ENCODE measurements at regions of chr6 and their contacts with region 1.

Region 1: GRCh38 chr6:48826901-48827701 is 636.0 kb downstream of the MMUT start:
- DNase-seq: peak; percentile 99
- ATAC-seq: peak; percentile 88
- H3K4me3 ChIP-seq: peak overlapping the region; percentile 55
- H3K27ac ChIP-seq: peak overlapping the region; percentile 99
- H3K4me1 ChIP-seq: peaks cover 45% of the 10 kb centered on the region
- H3K27me3 ChIP-seq: no peaks in the 10 kb centered on the region
- CTCF ChIP-seq: no peak

Region 2: DNA sequence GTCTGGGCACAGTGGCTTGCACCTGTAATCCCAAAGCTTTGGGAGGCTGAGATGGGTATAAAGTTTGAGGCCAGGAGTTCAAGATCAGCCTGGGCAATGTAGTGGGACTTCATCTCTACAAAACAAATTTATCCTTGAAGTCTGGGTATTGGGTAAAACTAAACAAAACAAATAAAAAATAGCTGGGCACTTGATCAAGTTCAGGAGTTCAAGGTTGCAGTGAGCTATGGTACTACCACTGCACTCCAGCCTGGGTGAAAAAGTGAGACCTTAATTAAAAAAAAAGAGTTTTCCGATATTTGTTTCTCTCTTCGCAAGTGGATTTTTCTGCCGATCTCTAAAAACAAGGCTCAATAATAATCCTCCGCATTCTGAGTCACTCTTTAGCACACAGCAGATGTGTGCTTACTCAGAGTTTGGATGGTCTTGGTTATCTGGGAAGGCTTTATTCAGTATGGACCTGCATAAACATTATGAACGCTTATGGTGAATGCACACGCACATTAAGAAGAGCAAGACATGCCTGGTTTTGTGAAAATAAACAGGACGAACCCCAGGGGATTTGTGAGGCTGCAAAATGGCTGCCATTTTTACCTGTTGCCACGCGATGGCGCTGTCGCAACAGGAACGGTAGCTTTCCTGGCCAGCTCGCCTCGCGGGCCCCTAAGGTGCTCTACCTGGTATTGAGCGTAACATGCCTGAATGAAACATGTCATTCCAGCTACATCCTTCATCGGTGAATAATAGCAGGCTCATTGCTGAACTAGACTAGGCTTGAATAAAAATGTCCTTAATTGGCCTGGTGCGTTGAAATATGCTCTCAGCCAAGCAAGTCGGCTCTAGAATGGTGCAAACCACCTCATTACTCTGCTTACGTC is 1039.2 kb before region 1 on chr6:
- CTCF ChIA-PET with region 1: no interaction called
- POLR2A ChIA-PET with region 1: no interaction called
- intact Hi-C with region 1: loop called (anchors 2 kb)
- DNase-seq: peak; percentile 88
- ATAC-seq: peak; percentile 95
- H3K4me3 ChIP-seq: peak overlapping the region; percentile 27
- H3K27ac ChIP-seq: no peak overlapping the region
- H3K4me1 ChIP-seq: peaks cover 16% of the 10 kb centered on the region
- H3K27me3 ChIP-seq: no peaks in the 10 kb centered on the region
- CTCF ChIP-seq: peak; percentile 96

Region 3: GRCh38 chr6:48765352-48765961 is 61.6 kb before region 1 on chr6:
- CTCF ChIA-PET with region 1: interaction called, 9 read pairs
- POLR2A ChIA-PET with region 1: no interaction called
- intact Hi-C with region 1: loop called (anchors 1 kb)
- DNase-seq: peak; percentile 87
- ATAC-seq: peak; percentile 82
- H3K4me3 ChIP-seq: no peak overlapping the region
- H3K27ac ChIP-seq: peak overlapping the region; percentile 79
- H3K4me1 ChIP-seq: peaks cover 34% of the 10 kb centered on the region
- H3K27me3 ChIP-seq: no peaks in the 10 kb centered on the region
- CTCF ChIP-seq: peak; percentile 87

Region 4: DNA sequence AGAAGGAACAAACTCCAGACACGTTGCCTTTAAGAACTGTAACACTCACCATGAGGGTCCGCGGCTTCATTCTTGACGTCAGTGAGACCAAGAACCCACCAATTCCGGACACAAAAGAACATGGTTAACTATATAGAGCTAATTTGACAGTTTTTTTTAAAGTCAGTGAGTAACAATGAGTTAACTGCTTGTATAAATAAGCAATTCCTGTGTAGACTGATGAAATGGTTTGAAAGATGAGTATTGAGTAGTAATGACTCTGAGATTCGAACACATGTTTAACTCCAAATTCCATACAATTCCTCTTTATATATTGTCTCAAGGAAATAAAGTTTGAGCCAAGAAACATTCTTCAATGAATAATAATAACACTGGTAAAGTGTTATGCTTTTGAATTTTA is 157.9 kb after region 1 on chr6:
- CTCF ChIA-PET with region 1: no interaction called
- POLR2A ChIA-PET with region 1: no interaction called
- intact Hi-C with region 1: no loop called
- DNase-seq: peak; percentile 28
- ATAC-seq: 0 out of 2 replicates have a peak, but pooled peaks have one; percentile 20
- H3K4me3 ChIP-seq: no peak overlapping the region
- H3K27ac ChIP-seq: no peak overlapping the region
- H3K4me1 ChIP-seq: no peaks in the 10 kb centered on the region
- H3K27me3 ChIP-seq: no peaks in the 10 kb centered on the region
- CTCF ChIP-seq: no peak

Region 5: GRCh38 chr6:49001856-49002541 is 174.9 kb after region 1 on chr6:
- CTCF ChIA-PET with region 1: no interaction called
- POLR2A ChIA-PET with region 1: no interaction called
- intact Hi-C with region 1: loop called (anchors 1 kb)
- DNase-seq: peak; percentile 67
- ATAC-seq: peak; percentile 96
- H3K4me3 ChIP-seq: no peak overlapping the region
- H3K27ac ChIP-seq: peak overlapping the region; percentile 32; the same call in 1 of the 2 replicates
- H3K4me1 ChIP-seq: peaks cover 12% of the 10 kb centered on the region
- H3K27me3 ChIP-seq: no peaks in the 10 kb centered on the region
- CTCF ChIP-seq: no peak

Region 6: DNA sequence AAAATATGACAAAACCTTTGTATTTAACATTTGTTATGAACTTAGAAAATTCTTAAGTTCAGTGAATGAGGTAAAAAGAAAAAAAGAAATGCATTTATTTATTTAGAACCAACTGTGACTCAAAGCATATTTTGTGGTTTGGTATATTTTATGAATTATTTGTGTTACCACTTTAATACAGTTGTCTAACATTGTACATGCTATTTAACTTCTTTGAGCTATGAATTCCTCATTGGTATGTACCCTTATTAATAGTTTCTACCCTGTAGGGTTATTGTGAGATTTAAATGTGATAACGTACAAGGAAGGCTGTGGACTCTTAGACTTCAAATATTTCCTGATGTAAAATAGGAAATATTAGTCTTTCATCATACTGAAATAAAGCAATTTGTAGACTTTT is 473.3 kb after region 1 on chr6:
- CTCF ChIA-PET with region 1: no interaction called
- POLR2A ChIA-PET with region 1: interaction called, 4 read pairs
- intact Hi-C with region 1: loop called (anchors 2 kb)
- DNase-seq: peak; percentile 60
- ATAC-seq: peak; percentile 87
- H3K4me3 ChIP-seq: no peak overlapping the region
- H3K27ac ChIP-seq: peak overlapping the region; percentile 51
- H3K4me1 ChIP-seq: peaks cover 18% of the 10 kb centered on the region
- H3K27me3 ChIP-seq: no peaks in the 10 kb centered on the region
- CTCF ChIP-seq: no peak

Region 7: DNA sequence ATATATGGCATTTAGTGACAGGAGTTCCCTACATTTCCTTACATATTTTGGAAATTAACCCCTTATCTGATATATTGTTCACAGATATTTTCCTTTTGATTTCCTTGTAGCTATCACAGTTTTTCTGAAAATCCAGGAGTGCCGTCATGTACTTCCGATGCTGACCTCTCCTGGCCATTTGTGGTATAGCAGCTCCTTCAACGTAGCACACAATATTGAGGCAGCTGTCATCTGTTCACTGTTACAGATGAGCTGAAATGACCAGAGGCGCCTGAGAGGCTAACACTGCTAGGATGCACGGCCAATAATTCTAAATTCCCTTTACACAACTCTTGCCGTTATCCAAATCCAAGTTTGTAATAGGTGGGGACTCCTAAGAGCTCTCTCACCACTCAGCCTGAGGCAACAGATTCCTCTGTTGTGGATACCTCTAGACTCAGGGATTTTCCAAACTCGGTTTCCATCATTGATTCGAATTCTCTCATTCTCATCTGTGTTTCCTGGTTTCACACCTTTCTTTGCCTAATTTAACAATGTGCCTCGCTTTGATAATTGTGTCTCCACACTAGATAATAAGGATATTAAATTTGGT is 582.9 kb after region 1 on chr6:
- CTCF ChIA-PET with region 1: interaction called, 4 read pairs
- POLR2A ChIA-PET with region 1: no interaction called
- intact Hi-C with region 1: loop called (anchors 2 kb)
- DNase-seq: peak; percentile 91
- ATAC-seq: peak; percentile 89
- H3K4me3 ChIP-seq: no peak overlapping the region
- H3K27ac ChIP-seq: no peak overlapping the region
- H3K4me1 ChIP-seq: peaks cover 4% of the 10 kb centered on the region; the same call in 1 of the 2 replicates
- H3K27me3 ChIP-seq: no peaks in the 10 kb centered on the region
- CTCF ChIP-seq: peak; percentile 84

Measured in PC-3 (cell line).